CD4-positive, alpha-beta T cell (primary cell): ENCODE measurements at regions of chr6 and their contacts with region 1.

Region 1: DNA sequence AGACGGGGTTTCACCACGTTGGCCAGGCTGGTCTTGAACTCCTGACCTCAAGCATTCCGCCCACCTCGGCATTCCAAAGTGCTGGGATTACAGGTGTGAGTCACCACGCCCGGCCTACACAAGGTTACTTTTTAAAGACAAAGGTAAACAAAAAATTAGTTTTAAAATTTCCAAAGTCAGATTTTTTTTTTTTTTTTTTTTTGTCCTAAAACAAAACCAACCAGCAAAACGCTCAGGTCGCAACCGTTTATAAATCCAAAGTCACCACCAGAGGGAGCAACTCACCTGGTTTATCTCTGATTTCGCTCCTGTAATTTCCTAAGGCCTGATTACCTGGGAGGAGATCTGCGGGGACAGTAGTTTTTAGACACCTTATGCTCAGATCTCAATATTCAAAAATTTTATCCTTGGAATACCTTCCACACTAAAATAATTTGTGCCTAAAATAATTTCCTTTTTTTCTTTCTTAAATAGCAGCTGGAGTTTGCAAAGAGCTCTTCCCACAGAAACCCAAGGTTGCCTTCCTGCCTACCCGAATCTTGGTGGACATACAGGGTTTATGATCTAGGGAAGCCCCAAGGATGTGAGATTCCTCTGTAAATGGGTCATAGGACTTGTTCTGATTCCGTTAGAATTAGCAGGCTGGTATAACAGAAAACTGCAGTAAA is 19.8 kb upstream of the TREM1 start:
- DNase-seq: peak in 11 of 14 experiments; percentile 16 to 80 (median 24)
- ATAC-seq: no peak
- H3K4me3 ChIP-seq: no peak overlapping the region
- H3K4me3 Mint-ChIP-seq: no peak overlapping the region
- H3K27ac ChIP-seq: no peak overlapping the region
- H3K27ac Mint-ChIP-seq: no peak overlapping the region
- H3K4me1 ChIP-seq: no peaks in the 10 kb centered on the region
- H3K4me1 Mint-ChIP-seq: peaks cover 5% of the 10 kb centered on the region
- H3K27me3 ChIP-seq: peaks cover 2 to 5% of the 10 kb centered on the region in 2 experiments
- H3K27me3 Mint-ChIP-seq: peaks cover 5% of the 10 kb centered on the region
- CTCF ChIP-seq: peak; percentile 77

Region 2: GRCh38 chr6:41200296-41200900 is 105.9 kb before region 1 on chr6:
- CTCF ChIA-PET with region 1: no interaction called
- POLR2A ChIA-PET with region 1: no interaction called
- intact Hi-C with region 1: loop called in 1 of 2 experiments (anchors 5 kb)
- DNase-seq: peak; percentile 14 to 93 (median 50)
- ATAC-seq: peak; percentile 82
- H3K4me3 ChIP-seq: peak overlapping the region; percentile 34
- H3K4me3 Mint-ChIP-seq: peak overlapping the region; percentile 81
- H3K27ac ChIP-seq: peak overlapping the region; percentile 85 to 96
- H3K27ac Mint-ChIP-seq: peak overlapping the region; percentile 100
- H3K4me1 ChIP-seq: peaks cover 56% of the 10 kb centered on the region
- H3K4me1 Mint-ChIP-seq: peaks cover 79% of the 10 kb centered on the region
- H3K27me3 ChIP-seq: no peaks in the 10 kb centered on the region
- H3K27me3 Mint-ChIP-seq: no peaks in the 10 kb centered on the region
- CTCF ChIP-seq: no peak